Dendritic cell treated with granulocyte-macrophage colony-stimulating factor and Interleukin-4, amounts not matched to agents 40 ng/mL and 50 ng/mL, for 4 days (primary cell): ENCODE measurements at regions of chr10 and their contacts with region 1.

Region 1: GRCh38 chr10:75431180-75432111 is at the start of gene LRMDA:
- H3K4me3 Mint-ChIP-seq: peak within 1 kb of the TSS; percentile 88
- H3K27ac Mint-ChIP-seq: peak within 1 kb of the TSS; percentile 89
- H3K4me1 Mint-ChIP-seq: peaks cover 75% of the 10 kb centered on the region
- H3K27me3 Mint-ChIP-seq: no peaks in the 10 kb centered on the region

Region 2: GRCh38 chr10:75375838-75376237 is 55.6 kb before region 1 on chr10:
- intact Hi-C with region 1: no loop called
- H3K4me3 Mint-ChIP-seq: no peak overlapping the region
- H3K27ac Mint-ChIP-seq: peak overlapping the region; percentile 80
- H3K4me1 Mint-ChIP-seq: peaks cover 60% of the 10 kb centered on the region
- H3K27me3 Mint-ChIP-seq: peaks cover 8% of the 10 kb centered on the region

Region 3: GRCh38 chr10:75612904-75613684 is 181.6 kb after region 1 on chr10:
- intact Hi-C with region 1: loop called (anchors 5 kb)
- H3K4me3 Mint-ChIP-seq: peak overlapping the region; percentile 47
- H3K27ac Mint-ChIP-seq: peak overlapping the region; percentile 86
- H3K4me1 Mint-ChIP-seq: peaks cover 80% of the 10 kb centered on the region
- H3K27me3 Mint-ChIP-seq: no peaks in the 10 kb centered on the region